Common myeloid progenitor, CD34-positive (primary cell): ENCODE measurements at regions of chr12 and their contacts with region 1.

Region 1: DNA sequence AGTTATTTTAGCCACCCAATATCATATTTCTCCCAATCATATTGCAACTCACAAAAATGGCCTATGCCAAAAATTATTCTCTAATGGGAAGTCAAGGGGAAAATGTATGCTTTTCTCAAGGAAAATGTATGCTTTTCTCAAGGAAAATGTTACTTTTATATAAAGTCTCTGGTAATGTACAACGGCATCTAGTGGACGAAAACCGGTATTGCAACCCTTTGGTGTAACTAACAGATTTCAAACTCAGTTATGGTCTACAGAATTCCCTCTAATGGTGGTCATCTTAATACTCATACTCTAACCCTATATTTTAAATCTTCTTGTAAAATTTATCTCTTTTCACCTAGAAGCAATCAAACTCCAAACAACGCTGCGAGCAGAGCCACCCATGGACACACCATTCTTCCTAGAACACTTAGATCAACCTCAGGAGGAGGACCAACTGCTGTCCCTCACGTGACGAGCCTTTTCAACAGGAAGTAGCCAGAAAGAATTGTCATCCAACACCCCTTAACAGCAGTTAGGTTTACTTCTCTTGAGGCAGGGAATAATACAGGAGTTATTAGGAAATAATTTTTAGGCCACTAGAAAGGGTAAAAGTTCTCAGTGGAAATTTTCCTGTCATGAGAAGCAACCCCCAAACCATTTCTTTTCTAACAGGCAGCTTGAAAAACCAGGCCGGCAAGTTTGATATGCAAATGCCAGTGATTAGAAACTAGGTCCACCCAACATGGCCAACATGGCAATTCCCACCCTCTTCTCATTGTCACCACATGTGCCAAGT is 20.1 kb downstream of the APOBEC1 start:
- DNase-seq: peak in 1 of 3 donors; percentile 52
- H3K4me3 ChIP-seq: no peak overlapping the region
- H3K27ac ChIP-seq: no peak overlapping the region
- H3K4me1 ChIP-seq: peaks cover 0 to 21% (median 11%) of the 10 kb centered on the region in 4 experiments
- H3K27me3 ChIP-seq: no peaks in the 10 kb centered on the region

Region 2: GRCh38 chr12:7656121-7656520 is 10.5 kb after region 1 on chr12:
- CTCF ChIA-PET with region 1: interaction called, 13 read pairs
- POLR2A ChIA-PET with region 1: no interaction called
- DNase-seq: peak in 1 of 3 donors; percentile 42
- H3K4me3 ChIP-seq: no peak overlapping the region
- H3K27ac ChIP-seq: no peak overlapping the region
- H3K4me1 ChIP-seq: peaks cover 7 to 29% (median 19%) of the 10 kb centered on the region in 4 experiments
- H3K27me3 ChIP-seq: no peaks in the 10 kb centered on the region

Region 3: GRCh38 chr12:7667125-7667524 is 21.5 kb after region 1 on chr12:
- CTCF ChIA-PET with region 1: interaction called, 38 read pairs
- POLR2A ChIA-PET with region 1: no interaction called
- DNase-seq: peak; percentile 56 to 73 (median 71)
- H3K4me3 ChIP-seq: no peak overlapping the region
- H3K27ac ChIP-seq: no peak overlapping the region
- H3K4me1 ChIP-seq: peaks cover 0 to 3% (median 0%) of the 10 kb centered on the region in 4 experiments
- H3K27me3 ChIP-seq: no peaks in the 10 kb centered on the region

Region 4: GRCh38 chr12:7806863-7807487 is 161.4 kb after region 1 on chr12:
- CTCF ChIA-PET with region 1: interaction called, 19 read pairs
- POLR2A ChIA-PET with region 1: no interaction called
- DNase-seq: peak; percentile 74 to 81 (median 75)
- H3K4me3 ChIP-seq: no peak overlapping the region
- H3K27ac ChIP-seq: no peak overlapping the region
- H3K4me1 ChIP-seq: peaks cover 4 to 12% (median 6%) of the 10 kb centered on the region in 4 experiments
- H3K27me3 ChIP-seq: no peaks in the 10 kb centered on the region